ENCODE measurements at regions of chr6 and their contacts with region 1.

Region 1: GRCh38 chr6:114055763-114056162 is 84.8 kb upstream of the HDAC2 start:
- DNase-seq: no peak
- ATAC-seq: no peak
- H3K4me3 ChIP-seq: no peak overlapping the region
- H3K27ac ChIP-seq: no peak overlapping the region
- H3K4me1 ChIP-seq: no peaks in the 10 kb centered on the region
- H3K27me3 ChIP-seq: no peaks in the 10 kb centered on the region
- CTCF ChIP-seq: no peak
- EP300 ChIP-seq: no peak
- POLR2A ChIP-seq: no peak
- RAD21 ChIP-seq: no peak

Region 2: GRCh38 chr6:114024746-114025145 is 31.0 kb before region 1 on chr6:
- CTCF ChIA-PET with region 1: no interaction called
- POLR2A ChIA-PET with region 1: no interaction called
- in situ Hi-C with region 1: no loop called
- intact Hi-C with region 1: loop called (anchors 1 kb)
- DNase-seq: no peak
- ATAC-seq: no peak
- H3K4me3 ChIP-seq: no peak overlapping the region
- H3K27ac ChIP-seq: no peak overlapping the region
- H3K4me1 ChIP-seq: peaks cover 15% of the 10 kb centered on the region
- H3K27me3 ChIP-seq: no peaks in the 10 kb centered on the region
- CTCF ChIP-seq: no peak
- EP300 ChIP-seq: no peak
- POLR2A ChIP-seq: no peak
- RAD21 ChIP-seq: no peak